HEK293T (cell line): ENCODE measurements at regions of chr12 and their contacts with region 1.

Region 1: GRCh38 chr12:6752921-6753771 is at the start of gene MLF2:
- DNase-seq: peak; percentile 98

Region 2: GRCh38 chr12:6688999-6689882 is 63.9 kb before region 1 on chr12 and contains the start of gene ZNF384:
- CTCF ChIA-PET with region 1: interaction called, 5 read pairs
- POLR2A ChIA-PET with region 1: interaction called, 29 read pairs
- DNase-seq: peak; percentile 95

Region 3: DNA sequence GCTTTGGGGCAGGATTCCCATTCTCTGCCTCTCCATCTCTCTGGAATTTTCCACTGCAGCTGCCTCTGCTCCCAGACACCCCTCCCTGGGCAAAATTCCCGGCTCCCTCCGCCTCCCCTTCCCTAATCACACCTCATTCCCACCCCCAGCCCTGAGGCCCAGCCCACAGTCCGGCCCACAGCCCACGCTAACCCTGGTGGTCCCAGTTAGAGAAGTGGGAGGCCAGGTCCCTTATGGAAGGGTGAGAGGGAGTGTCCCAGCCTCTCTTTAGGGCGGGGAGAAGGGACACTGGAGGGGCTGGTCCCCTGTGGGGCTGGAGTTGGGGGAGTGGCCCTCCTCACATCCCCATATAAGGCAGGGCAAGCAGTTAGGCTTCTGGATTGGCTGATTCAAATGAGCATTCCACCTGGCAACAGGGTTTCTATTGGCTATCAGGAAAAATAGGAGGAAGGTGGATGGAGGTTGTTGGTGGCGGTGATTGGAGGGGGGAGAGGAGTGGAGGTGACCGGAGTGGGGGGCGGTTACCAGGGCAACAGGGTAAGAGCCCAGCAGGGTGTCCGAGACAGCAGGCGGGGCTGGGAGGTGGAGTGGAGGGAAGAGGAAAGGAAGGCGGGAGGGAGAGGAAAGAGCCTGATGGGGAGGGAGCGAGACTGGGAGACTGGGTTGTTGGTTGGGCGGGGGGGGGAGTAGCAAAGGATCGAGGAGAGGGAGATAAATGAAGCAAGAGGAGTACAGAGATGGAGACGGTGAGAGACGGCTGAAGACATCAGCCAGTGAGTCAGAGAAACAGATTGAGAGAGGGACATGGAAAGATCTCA is 11.1 kb after region 1 on chr12:
- CTCF ChIA-PET with region 1: interaction called, 38 read pairs
- POLR2A ChIA-PET with region 1: interaction called, 148 read pairs
- DNase-seq: peak; percentile 94

Region 4: GRCh38 chr12:6784296-6784695 is 31.1 kb after region 1 on chr12:
- CTCF ChIA-PET with region 1: interaction called, 18 read pairs
- POLR2A ChIA-PET with region 1: interaction called, 28 read pairs
- DNase-seq: no peak

Region 5: DNA sequence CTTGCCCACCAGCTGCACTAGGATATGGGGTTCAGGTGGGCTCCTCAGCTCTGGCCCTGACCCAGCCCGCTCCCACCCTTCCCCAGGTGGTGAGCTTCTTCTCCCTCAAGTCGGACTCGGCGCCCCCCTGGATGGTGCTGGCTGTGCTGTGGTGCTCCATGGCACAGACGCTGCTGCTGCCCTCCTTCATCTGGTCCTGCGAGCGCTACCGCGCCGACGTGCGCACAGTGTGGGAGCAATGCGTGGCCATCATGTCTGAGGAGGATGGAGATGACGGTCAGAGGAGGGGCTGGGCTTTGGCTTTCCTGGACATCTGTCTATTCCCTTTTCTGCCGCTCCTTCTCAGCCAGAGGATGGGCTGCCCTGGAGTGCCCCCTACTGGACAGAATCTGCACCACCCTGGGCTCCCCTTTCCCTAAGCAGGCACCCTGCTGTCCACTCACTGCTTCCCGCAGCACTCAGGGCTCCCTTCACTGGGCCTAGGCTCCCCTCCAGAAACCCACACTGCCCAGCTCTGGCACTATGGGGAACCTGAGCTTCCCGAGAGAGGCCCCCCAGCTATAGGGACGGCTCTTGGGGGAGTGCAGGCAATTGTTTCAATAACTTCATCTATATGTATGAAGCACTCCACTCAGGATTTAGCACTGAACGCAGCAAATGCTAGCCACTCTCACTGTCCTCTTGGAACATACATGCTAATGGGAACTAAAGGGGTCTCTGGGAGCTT is 72.4 kb after region 1 on chr12:
- CTCF ChIA-PET with region 1: interaction called, 28 read pairs
- POLR2A ChIA-PET with region 1: interaction called, 73 read pairs
- DNase-seq: peak; percentile 85

Region 6: GRCh38 chr12:6867413-6868210 is 114.5 kb after region 1 on chr12 and contains the start of gene TPI1:
- CTCF ChIA-PET with region 1: interaction called, 3 read pairs
- POLR2A ChIA-PET with region 1: interaction called, 15 read pairs
- DNase-seq: peak; percentile 91

Region 7: GRCh38 chr12:6978609-6979011 is 225.5 kb after region 1 on chr12:
- CTCF ChIA-PET with region 1: no interaction called
- POLR2A ChIA-PET with region 1: no interaction called
- DNase-seq: no peak